ENCODE measurements at regions of chr6 and their contacts with region 1.

Region 1: DNA sequence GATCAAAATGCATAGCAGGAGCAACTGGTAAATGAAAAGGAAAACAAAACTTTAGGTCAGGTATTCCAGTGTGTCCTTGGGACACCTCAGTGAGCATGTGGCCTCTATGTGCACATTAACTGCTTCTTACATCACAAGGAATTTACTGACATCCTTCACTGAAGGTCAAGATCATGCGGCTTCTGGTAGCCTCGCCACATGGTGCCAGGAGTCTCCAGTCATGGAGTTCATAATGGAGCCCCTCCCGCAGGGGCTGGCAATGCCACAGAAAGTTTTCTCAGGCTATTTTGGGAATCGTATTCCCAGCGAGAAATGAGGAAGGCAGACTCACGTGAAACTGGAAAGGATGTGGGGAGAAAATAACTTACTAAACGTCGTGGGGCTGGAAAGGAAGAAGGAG is 19.7 kb upstream of the SLC22A3 start:
- DNase-seq: peak; percentile 77 to 86
- ATAC-seq: peak; percentile 31
- H3K4me3 ChIP-seq: no peak overlapping the region
- H3K27ac ChIP-seq: peak overlapping the region; percentile 22 to 71
- H3K4me1 ChIP-seq: no peaks in the 10 kb centered on the region
- H3K27me3 ChIP-seq: no peaks in the 10 kb centered on the region

Region 2: GRCh38 chr6:159422041-159422984 is 906.1 kb before region 1 on chr6:
- intact Hi-C with region 1: no loop called
- DNase-seq: peak; percentile 71 to 81
- ATAC-seq: peak; percentile 5
- H3K4me3 ChIP-seq: no peak overlapping the region
- H3K27ac ChIP-seq: peak overlapping the region in 1 of 2 donors; percentile 48
- H3K4me1 ChIP-seq: no peaks in the 10 kb centered on the region
- H3K27me3 ChIP-seq: no peaks in the 10 kb centered on the region

Region 3: DNA sequence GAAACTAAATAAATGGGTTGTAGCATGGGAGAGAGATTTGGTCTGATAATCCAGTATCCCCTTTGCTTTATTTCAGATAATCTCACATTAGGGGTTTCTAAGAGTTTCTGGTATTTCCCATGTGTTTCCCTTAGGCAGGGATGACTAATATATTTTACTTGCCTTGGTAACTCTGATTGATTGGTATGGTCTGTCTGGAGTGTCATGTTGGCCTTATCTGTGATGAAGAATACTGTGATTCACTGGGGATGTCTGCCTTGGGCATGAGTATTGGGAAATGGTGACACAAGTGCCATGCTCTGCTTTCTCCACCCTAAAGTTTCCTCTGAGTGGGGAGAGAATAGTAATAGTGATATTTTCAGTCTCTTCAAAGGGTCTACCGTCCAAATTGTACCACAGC is 79.9 kb before region 1 on chr6:
- intact Hi-C with region 1: loop called in 1 of 2 experiments (anchors 5 kb)
- DNase-seq: no peak
- ATAC-seq: no peak
- H3K4me3 ChIP-seq: no peak overlapping the region
- H3K27ac ChIP-seq: no peak overlapping the region
- H3K4me1 ChIP-seq: no peaks in the 10 kb centered on the region
- H3K27me3 ChIP-seq: no peaks in the 10 kb centered on the region

Region 4: DNA sequence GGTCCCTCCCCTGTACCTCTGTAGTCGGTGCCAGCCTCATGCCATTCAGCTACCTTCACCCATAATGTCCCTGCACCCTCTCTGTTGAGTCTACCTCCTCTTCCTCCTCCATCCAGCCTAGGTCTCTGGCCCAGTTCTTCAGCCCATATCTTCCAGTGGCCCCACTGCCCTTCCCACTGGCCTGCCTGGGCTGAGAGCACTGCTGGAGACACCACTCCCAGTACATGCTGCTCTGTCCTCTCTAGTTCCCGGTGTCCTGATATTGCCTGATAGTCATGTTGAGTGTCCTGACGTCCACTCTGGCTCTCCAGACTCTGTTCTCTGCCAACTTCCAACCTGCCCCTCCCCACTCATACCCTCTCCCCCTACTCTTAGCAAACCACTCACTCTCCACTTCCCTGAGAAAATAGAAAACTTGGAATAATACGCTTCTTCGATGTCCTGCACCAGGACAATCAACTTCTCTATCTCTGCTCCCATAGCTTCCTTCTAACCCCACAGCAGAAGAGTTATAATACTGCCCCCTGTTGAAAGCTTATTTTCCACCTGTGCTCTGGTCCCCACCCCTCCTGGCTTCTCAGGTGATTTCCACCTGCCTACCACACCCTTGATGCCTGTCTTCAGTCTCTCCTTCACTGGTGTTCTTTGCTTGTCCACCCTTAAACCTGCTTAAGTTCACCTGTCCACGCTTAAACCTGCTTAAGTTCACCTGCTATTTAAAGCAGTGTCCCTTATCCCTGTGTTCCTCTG is 39.5 kb after region 1 on chr6:
- intact Hi-C with region 1: no loop called
- DNase-seq: no peak
- ATAC-seq: peak; percentile 46
- H3K4me3 ChIP-seq: no peak overlapping the region
- H3K27ac ChIP-seq: peak overlapping the region in 1 of 2 donors; percentile 13
- H3K4me1 ChIP-seq: no peaks in the 10 kb centered on the region
- H3K27me3 ChIP-seq: no peaks in the 10 kb centered on the region

Measured in aorta (tissue), 5 donors.